ENCODE measurements at regions of chr4 and their contacts with region 1.

Region 1: DNA sequence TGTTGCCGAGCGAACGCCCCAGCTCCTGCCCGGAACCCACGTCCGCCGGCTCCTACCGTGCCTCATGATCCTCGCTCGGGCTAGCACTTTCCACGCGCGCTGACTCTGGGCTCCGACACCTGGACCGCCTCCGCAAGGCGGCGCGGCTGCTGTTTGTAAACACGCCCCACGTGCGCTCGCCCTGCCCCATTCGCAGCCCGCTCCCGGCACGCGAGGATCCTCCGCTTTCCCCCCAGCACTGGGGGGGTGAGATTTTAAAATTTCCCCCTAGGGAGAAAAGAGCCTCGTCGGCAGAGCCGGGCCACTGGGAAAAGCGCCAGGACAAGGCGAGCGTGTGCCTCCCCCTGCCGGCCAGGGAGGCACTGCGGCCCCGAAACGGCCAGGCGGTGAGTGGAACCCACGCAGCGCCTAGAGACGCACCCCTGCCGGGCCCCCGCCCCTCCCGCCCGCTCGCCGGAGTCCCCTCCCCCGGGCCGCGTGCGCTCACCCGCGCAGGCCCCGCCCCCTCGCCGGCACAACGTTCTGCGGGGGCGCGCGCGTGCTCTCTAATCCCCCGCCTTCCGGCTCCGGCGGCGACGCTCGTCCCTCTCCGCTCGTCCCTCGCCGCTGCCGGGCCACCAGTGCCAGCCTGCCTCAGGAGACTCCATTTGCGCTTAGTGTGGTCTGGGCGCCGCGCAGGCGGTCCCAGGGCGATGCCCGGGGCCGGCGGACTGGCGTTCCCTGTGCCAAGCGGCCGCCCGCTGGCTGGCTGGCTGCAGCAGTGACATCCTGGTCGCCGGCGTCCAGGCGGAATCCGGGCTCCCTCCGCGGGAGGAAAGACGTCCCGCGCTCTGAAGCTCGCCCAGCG is at the start of gene TIGD2:
- DNase-seq: peak; percentile 80
- H3K4me3 Mint-ChIP-seq: peak within 1 kb of the TSS; percentile 86
- H3K27ac Mint-ChIP-seq: peak within 1 kb of the TSS; percentile 71
- H3K4me1 Mint-ChIP-seq: peaks cover 27% of the 10 kb centered on the region
- H3K27me3 Mint-ChIP-seq: peaks cover 20% of the 10 kb centered on the region
- total RNA-seq, gene TIGD2: 2.0 and 2.3 TPM in 2 replicates

Region 2: DNA sequence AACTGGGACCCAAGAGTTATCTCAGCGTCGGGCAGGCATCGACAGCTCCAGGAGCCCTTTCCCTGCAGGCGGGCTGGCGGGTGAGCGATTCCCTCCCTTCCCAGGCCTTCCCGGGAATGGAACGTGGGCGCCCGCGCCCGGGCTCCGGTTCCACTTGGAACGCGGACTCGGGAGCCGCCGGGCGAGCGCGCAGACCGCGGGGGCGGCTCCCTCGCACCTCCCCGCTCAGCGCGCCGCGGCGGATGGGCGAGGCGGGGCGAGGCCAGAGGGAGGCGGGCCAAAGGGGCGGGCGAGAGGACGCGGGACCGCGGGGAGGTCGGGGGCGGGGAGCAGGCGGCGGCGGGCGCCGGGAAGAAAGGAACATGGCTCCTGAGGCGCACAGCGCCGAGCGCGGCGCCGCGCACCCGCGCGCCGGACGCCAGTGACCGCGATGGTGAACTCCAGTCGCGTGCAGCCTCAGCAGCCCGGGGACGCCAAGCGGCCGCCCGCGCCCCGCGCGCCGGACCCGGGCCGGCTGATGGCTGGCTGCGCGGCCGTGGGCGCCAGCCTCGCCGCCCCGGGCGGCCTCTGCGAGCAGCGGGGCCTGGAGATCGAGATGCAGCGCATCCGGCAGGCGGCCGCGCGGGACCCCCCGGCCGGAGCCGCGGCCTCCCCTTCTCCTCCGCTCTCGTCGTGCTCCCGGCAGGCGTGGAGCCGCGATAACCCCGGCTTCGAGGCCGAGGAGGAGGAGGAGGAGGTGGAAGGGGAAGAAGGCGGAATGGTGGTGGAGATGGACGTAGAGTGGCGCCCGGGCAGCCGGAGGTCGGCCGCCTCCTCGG is 1103.7 kb before region 1 on chr4 and contains the start of gene PKD2:
- intact Hi-C with region 1: loop called (anchors 5 kb)
- DNase-seq: peak; percentile 79
- H3K4me3 Mint-ChIP-seq: peak within 1 kb of the TSS; percentile 89
- H3K27ac Mint-ChIP-seq: peak within 1 kb of the TSS; percentile 80
- H3K4me1 Mint-ChIP-seq: peaks cover 41% of the 10 kb centered on the region
- H3K27me3 Mint-ChIP-seq: peaks cover 20% of the 10 kb centered on the region
- total RNA-seq, gene PKD2: 10.1 and 11.7 TPM in 2 replicates

Region 3: GRCh38 chr4:88523325-88524129 is 587.7 kb before region 1 on chr4 and contains the start of gene PYURF:
- intact Hi-C with region 1: loop called (anchors 2 kb)
- DNase-seq: peak; percentile 79
- H3K4me3 Mint-ChIP-seq: peak within 1 kb of the TSS; percentile 99
- H3K27ac Mint-ChIP-seq: peak within 1 kb of the TSS; percentile 97
- H3K4me1 Mint-ChIP-seq: peaks cover 60% of the 10 kb centered on the region
- H3K27me3 Mint-ChIP-seq: peaks cover 2% of the 10 kb centered on the region
- total RNA-seq, gene PYURF: 55.9 and 61.5 TPM in 2 replicates

Region 4: GRCh38 chr4:88697588-88698329 is 413.4 kb before region 1 on chr4 and contains the start of gene NAP1L5:
- intact Hi-C with region 1: loop called (anchors 1 kb)
- DNase-seq: peak; percentile 61
- H3K4me3 Mint-ChIP-seq: peak within 1 kb of the TSS; percentile 88
- H3K27ac Mint-ChIP-seq: peak within 1 kb of the TSS; percentile 83
- H3K4me1 Mint-ChIP-seq: no peaks in the 10 kb centered on the region
- H3K27me3 Mint-ChIP-seq: peaks cover 2% of the 10 kb centered on the region
- total RNA-seq, gene NAP1L5: 5.5 and 6.1 TPM in 2 replicates

Region 5: GRCh38 chr4:88846206-88846790 is 264.9 kb before region 1 on chr4:
- intact Hi-C with region 1: no loop called
- DNase-seq: no peak
- H3K4me3 Mint-ChIP-seq: no peak overlapping the region
- H3K27ac Mint-ChIP-seq: no peak overlapping the region
- H3K4me1 Mint-ChIP-seq: no peaks in the 10 kb centered on the region
- H3K27me3 Mint-ChIP-seq: peaks cover 8% of the 10 kb centered on the region

Region 6: DNA sequence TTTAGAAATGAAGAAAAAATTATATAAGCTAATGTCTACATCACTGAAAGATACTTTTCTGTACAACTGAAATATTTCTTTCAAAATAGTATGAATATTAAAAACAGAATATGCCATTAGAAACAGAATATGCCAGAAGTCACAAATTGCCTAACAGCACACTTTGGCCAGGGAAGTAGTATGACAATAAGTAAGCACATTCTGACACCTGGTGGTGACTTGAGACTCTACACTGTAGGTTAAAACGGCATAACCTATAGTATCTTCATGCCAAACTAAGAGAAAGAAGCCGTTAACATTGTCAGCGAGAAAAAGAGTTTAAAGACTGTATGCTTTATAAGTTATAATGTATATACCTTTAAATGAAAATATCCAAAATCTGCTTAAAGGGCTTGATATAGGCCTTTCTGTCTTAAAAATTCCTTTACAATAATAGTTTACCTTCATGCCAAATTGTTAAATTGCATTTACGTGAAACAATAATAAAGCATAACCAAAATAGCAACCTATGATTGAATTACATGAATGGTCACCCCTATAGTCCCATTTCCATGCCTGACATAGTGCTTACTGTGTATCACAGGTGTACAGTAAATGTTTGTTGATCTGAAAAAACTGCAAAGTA is 87.0 kb before region 1 on chr4:
- intact Hi-C with region 1: loop called (anchors 1 kb)
- DNase-seq: peak; percentile 42
- H3K4me3 Mint-ChIP-seq: no peak overlapping the region
- H3K27ac Mint-ChIP-seq: no peak overlapping the region
- H3K4me1 Mint-ChIP-seq: no peaks in the 10 kb centered on the region
- H3K27me3 Mint-ChIP-seq: peaks cover 5% of the 10 kb centered on the region

Region 7: DNA sequence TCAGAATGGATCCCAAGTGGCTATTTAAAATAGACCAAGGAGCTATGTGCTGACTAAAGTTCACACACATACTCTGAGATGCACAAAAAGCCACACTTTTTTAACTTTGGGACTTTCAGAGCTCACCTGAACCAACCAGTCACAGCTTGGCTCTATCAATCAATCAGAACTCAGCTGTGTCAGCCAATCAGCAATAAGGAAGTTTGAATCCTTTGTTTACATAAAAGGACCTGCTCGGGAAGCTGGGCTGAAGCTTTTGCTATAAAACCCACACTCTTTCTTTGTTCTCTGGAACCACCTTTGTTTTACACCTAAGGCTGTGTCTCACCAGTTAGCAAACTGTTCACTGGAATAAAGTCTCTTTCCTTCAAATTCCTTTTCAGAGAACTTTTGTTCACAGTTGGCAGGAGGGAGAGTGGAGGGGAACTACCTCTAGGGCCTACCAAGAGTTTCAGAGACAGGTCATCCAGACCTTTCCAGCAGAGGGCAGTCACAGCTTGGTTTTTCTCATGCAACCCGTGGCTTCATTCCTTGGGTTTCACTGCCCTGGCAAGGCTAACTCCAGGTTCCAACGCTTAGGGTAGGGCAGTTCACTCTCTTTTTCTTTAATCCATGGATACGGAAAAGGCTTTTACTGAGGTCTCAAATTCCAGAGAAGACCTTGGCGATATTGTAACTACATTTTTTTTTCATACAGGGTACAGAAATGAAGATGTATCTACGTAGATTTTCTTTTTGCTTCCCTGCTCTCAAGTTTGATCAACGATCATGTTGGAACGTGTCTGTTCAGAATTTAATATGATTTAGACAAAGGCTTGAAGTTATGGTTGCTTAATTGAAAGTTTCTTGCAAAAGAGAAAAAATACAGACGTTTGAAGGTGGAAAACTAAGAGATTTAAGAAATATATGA is 115.7 kb after region 1 on chr4:
- intact Hi-C with region 1: loop called (anchors 5 kb)
- DNase-seq: peak; percentile 62
- H3K4me3 Mint-ChIP-seq: peak overlapping the region; percentile 28
- H3K27ac Mint-ChIP-seq: no peak overlapping the region
- H3K4me1 Mint-ChIP-seq: peaks cover 11% of the 10 kb centered on the region
- H3K27me3 Mint-ChIP-seq: no peaks in the 10 kb centered on the region

Region 8: GRCh38 chr4:89836897-89837384 is 725.7 kb after region 1 on chr4 and contains the start of gene SNCA:
- intact Hi-C with region 1: loop called (anchors 5 kb)
- DNase-seq: peak; percentile 27
- H3K4me3 Mint-ChIP-seq: peak within 1 kb of the TSS; percentile 80
- H3K27ac Mint-ChIP-seq: no peak within 1 kb of the TSS
- H3K4me1 Mint-ChIP-seq: peaks cover 33% of the 10 kb centered on the region
- H3K27me3 Mint-ChIP-seq: peaks cover 71% of the 10 kb centered on the region
- total RNA-seq, gene SNCA: 0.18 and 1.1 TPM in 2 replicates

Region 9: GRCh38 chr4:90226734-90227133 is 1115.5 kb after region 1 on chr4:
- intact Hi-C with region 1: no loop called
- DNase-seq: no peak
- H3K4me3 Mint-ChIP-seq: no peak overlapping the region
- H3K27ac Mint-ChIP-seq: no peak overlapping the region
- H3K4me1 Mint-ChIP-seq: no peaks in the 10 kb centered on the region
- H3K27me3 Mint-ChIP-seq: no peaks in the 10 kb centered on the region

Region 10: DNA sequence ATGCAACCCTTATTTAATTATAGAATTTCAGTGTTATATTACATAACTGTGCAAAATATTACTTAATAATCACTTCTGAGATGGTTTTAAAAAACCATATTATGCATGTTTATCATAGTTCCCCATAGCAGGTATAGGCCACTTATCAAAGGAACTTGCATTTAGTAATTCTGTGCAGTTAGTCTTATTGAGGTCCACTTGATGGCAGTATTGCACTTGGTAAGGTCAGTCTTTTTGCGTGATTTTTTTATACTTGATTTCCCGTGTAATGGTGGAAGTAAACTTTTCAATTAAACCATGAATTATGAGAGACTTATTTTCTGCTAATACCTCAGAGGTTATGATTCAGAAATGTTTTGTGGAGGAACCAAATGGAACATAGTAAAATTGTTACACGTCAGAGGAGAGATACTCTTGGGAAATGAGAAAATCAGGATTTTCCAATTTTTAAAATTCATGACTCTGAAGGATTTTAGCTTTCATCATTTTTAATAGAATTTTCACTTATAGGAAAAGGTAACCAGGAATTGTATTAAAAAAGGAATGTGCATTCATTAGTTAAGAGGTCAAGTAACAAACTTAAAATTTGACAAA is 1246.0 kb after region 1 on chr4:
- intact Hi-C with region 1: no loop called
- DNase-seq: no peak
- H3K4me3 Mint-ChIP-seq: no peak overlapping the region
- H3K27ac Mint-ChIP-seq: no peak overlapping the region
- H3K4me1 Mint-ChIP-seq: no peaks in the 10 kb centered on the region
- H3K27me3 Mint-ChIP-seq: no peaks in the 10 kb centered on the region